Left ventricle myocardium superior (tissue), 1 donor: ENCODE measurements at regions of chr15 and their contacts with region 1.

Region 1: GRCh38 chr15:95259513-95259912 is 1028.2 kb downstream of the MCTP2 start:
- DNase-seq: peak; percentile 42
- ATAC-seq: peak; percentile 77

Region 2: DNA sequence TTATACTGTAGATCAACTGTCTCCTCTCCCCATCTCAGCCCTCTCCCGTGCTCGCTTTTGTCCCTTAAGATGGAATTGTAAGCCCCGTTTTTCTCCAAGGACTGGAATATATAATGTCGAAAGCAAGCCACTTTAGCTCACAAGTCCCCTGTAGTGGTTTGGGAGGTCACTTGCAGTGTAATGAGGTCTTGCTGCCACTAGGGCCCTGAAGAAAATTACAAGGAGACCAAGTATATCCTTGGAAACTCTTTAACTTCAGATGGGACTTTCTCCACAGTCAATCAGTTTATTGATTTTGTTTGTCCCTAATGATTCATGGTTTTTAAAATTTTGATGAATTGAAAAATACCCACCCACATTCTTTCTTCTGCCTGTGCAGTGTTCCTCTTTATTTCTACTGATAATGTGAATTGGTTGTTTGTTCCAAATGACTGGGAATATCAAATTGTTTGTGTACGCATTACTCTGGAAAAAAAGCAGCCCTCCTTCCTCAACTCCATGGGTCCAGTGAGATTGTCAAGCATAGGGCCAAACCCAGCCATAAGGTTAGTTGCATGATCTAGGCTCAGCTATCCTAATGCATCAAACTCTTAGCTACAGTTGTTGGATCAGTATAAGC is 733.3 kb before region 1 on chr15:
- intact Hi-C with region 1: no loop called
- DNase-seq: no peak
- ATAC-seq: no peak

Region 3: GRCh38 chr15:96345560-96346399 is 1086.3 kb after region 1 on chr15:
- intact Hi-C with region 1: loop called (anchors 5 kb)
- DNase-seq: peak; percentile 84
- ATAC-seq: peak; percentile 77